ENCODE measurements at regions of chr20 and their contacts with region 1.

Region 1: GRCh38 chr20:36819659-36820058 is 46.1 kb upstream of the DSN1 start:
- DNase-seq: no peak
- H3K4me3 ChIP-seq: no peak overlapping the region
- H3K27ac ChIP-seq: peak overlapping the region in 1 of 2 donors; percentile 22
- H3K4me1 ChIP-seq: peaks cover 7% of the 10 kb centered on the region
- H3K27me3 ChIP-seq: no peaks in the 10 kb centered on the region
- CTCF ChIP-seq: no peak
- EP300 ChIP-seq: no peak
- POLR2A ChIP-seq: no peak

Region 2: DNA sequence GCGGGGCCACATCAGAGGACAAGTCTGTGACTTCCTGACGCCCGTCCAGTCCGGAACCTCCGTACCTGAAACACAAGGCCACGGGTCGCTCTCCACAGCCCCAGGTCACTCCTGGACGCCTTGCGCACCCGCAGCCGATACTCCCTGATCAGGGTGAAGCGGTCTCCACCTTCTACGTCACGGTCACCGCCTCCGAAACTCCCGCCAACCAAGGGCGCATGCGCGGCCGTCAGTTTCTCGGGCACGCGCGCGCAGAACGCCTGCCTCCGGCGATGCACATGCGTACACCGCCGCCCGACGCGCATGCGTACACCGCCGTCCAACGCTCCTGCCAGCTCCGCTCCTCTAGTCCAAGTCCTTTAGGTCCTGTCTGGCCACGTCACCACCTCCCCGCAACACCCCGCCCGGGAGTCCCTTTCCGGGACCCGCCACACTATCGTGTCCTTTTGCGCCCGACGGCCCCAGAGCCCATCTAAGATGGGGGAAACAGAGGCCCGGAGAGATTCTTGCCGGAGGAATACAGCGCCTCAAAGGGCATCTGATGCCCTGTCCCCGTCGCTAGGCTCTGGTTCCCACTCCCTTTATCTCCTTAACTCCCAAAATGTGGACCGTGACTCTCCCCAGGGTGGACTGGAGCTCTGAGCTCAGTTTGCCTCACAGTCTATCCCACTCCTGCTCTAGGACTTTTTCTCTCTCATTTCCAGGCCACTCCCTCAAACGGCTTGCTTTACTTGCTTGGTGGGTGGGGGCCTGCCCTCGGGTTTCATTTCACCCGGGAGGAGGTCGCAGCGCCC is 45.9 kb before region 1 on chr20 and contains the start of gene DSN1:
- intact Hi-C with region 1: loop called in 1 of 4 experiments (anchors 1 kb)
- DNase-seq: peak; percentile 95 to 100 (median 99)
- H3K4me3 ChIP-seq: peak within 1 kb of the TSS; percentile 80
- H3K27ac ChIP-seq: peak within 1 kb of the TSS; percentile 87 to 90
- H3K4me1 ChIP-seq: peaks cover 2% of the 10 kb centered on the region
- H3K27me3 ChIP-seq: no peaks in the 10 kb centered on the region
- CTCF ChIP-seq: peak in 1 of 3 donors; percentile 59
- EP300 ChIP-seq: no peak
- POLR2A ChIP-seq: peak; percentile 67
- total RNA-seq, gene DSN1: 3.3 to 7.0 (median 5.1) TPM